Activated CD4-positive, alpha-beta memory T cell treated with anti-CD3 and anti-CD28 coated beads for 36 hours (primary cell): ENCODE measurements at regions of chr14 and their contacts with region 1.

Region 1: GRCh38 chr14:100067971-100068959 is 3.0 kb downstream of the EVL start:
- DNase-seq: peak; percentile 95
- H3K4me3 Mint-ChIP-seq: peak overlapping the region; percentile 81
- H3K27ac Mint-ChIP-seq: peak overlapping the region; percentile 98
- H3K4me1 Mint-ChIP-seq: peaks cover 81% of the 10 kb centered on the region
- H3K27me3 Mint-ChIP-seq: no peaks in the 10 kb centered on the region

Region 2: GRCh38 chr14:99604283-99604765 is 463.9 kb before region 1 on chr14:
- CTCF ChIA-PET with region 1: no interaction called
- POLR2A ChIA-PET with region 1: no interaction called
- intact Hi-C with region 1: loop called (anchors 10 kb)
- DNase-seq: peak; percentile 95
- H3K4me3 Mint-ChIP-seq: peak overlapping the region; percentile 90
- H3K27ac Mint-ChIP-seq: peak overlapping the region; percentile 79
- H3K4me1 Mint-ChIP-seq: peaks cover 26% of the 10 kb centered on the region
- H3K27me3 Mint-ChIP-seq: no peaks in the 10 kb centered on the region

Region 3: GRCh38 chr14:100025111-100025510 is 43.2 kb before region 1 on chr14:
- CTCF ChIA-PET with region 1: no interaction called
- POLR2A ChIA-PET with region 1: no interaction called
- intact Hi-C with region 1: no loop called
- DNase-seq: peak; percentile 45
- H3K4me3 Mint-ChIP-seq: no peak overlapping the region
- H3K27ac Mint-ChIP-seq: no peak overlapping the region
- H3K4me1 Mint-ChIP-seq: peaks cover 9% of the 10 kb centered on the region
- H3K27me3 Mint-ChIP-seq: no peaks in the 10 kb centered on the region

Region 4: GRCh38 chr14:100078991-100079725 is 10.9 kb after region 1 on chr14:
- CTCF ChIA-PET with region 1: interaction called, 191 read pairs
- POLR2A ChIA-PET with region 1: interaction called, 302 read pairs
- intact Hi-C with region 1: loop called (anchors 1 kb)
- DNase-seq: peak; percentile 88
- H3K4me3 Mint-ChIP-seq: peak overlapping the region; percentile 63
- H3K27ac Mint-ChIP-seq: peak overlapping the region; percentile 87
- H3K4me1 Mint-ChIP-seq: peaks cover 96% of the 10 kb centered on the region
- H3K27me3 Mint-ChIP-seq: no peaks in the 10 kb centered on the region

Region 5: GRCh38 chr14:100108042-100108825 is 40.0 kb after region 1 on chr14:
- CTCF ChIA-PET with region 1: interaction called, 573 read pairs
- POLR2A ChIA-PET with region 1: interaction called, 200 read pairs
- intact Hi-C with region 1: loop called (anchors 1 kb)
- DNase-seq: peak; percentile 92
- H3K4me3 Mint-ChIP-seq: peak overlapping the region; percentile 4
- H3K27ac Mint-ChIP-seq: peak overlapping the region; percentile 90
- H3K4me1 Mint-ChIP-seq: peaks cover 62% of the 10 kb centered on the region
- H3K27me3 Mint-ChIP-seq: no peaks in the 10 kb centered on the region

Region 6: GRCh38 chr14:100165376-100165775 is 97.1 kb after region 1 on chr14:
- CTCF ChIA-PET with region 1: no interaction called
- POLR2A ChIA-PET with region 1: no interaction called
- intact Hi-C with region 1: no loop called
- DNase-seq: no peak
- H3K4me3 Mint-ChIP-seq: no peak overlapping the region
- H3K27ac Mint-ChIP-seq: no peak overlapping the region
- H3K4me1 Mint-ChIP-seq: peaks cover 5% of the 10 kb centered on the region
- H3K27me3 Mint-ChIP-seq: peaks cover 10% of the 10 kb centered on the region

Region 7: GRCh38 chr14:100239840-100240724 is 171.8 kb after region 1 on chr14:
- CTCF ChIA-PET with region 1: interaction called, 4 read pairs
- POLR2A ChIA-PET with region 1: interaction called, 3 read pairs
- intact Hi-C with region 1: loop called (anchors 2 kb)
- DNase-seq: peak; percentile 90
- H3K4me3 Mint-ChIP-seq: peak overlapping the region; percentile 81
- H3K27ac Mint-ChIP-seq: peak overlapping the region; percentile 89
- H3K4me1 Mint-ChIP-seq: peaks cover 54% of the 10 kb centered on the region
- H3K27me3 Mint-ChIP-seq: peaks cover 2% of the 10 kb centered on the region